ENCODE measurements at regions of chr6 and their contacts with region 1.

Region 1: GRCh38 chr6:158060455-158061360 is 79.0 kb downstream of the SYNJ2 start:
- DNase-seq: peak; percentile 88
- ATAC-seq: peak; percentile 87

Region 2: DNA sequence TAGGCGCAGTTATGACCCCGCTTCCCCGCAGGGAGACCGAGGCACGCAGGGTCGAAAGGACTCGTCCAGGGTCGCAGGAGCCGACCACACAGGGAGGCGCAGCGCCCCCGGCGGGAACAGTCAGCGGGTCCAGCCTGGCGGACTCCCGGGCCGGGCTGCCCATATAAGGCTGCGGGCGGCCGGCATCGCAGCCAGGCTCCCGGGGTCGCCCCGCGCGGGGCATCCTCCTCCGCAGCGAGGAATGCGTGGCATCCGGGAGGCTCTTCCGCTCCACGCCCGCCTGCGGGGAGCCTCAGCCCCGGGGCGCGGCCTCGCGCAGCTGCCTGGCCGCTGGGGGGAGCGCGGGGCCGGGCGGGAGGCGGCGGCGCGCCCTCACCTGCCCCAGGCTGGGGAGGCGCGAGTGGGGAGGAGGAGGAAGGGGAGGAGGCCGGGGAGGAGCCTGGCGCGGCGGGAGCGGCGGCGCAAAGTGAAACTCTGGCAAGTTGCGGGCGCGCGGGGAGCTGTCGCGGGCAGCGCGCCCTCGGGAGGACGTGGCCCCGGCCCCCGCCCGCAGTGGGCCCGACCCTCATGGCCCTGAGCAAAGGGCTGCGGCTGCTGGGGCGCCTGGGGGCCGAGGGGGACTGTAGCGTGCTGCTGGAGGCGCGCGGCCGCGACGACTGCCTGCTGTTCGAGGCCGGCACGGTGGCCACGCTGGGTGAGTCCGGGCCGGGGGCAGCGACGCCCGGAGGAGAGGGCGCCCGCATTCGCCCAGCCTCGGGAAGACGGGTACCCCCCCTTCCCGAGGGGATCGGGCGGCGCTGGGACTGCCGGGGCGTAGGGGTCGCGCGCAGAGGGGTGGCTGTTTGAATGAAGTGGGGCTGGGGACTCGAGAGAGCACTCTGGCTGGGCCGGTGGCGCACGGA is 79.1 kb before region 1 on chr6 and contains the start of gene SYNJ2:
- intact Hi-C with region 1: loop called (anchors 10 kb)
- DNase-seq: peak; percentile 87
- ATAC-seq: peak; percentile 94
- total RNA-seq, gene SYNJ2: 14.7 TPM